K562 (cell line): ENCODE measurements at regions of chr12 and their contacts with region 1.

Region 1: DNA sequence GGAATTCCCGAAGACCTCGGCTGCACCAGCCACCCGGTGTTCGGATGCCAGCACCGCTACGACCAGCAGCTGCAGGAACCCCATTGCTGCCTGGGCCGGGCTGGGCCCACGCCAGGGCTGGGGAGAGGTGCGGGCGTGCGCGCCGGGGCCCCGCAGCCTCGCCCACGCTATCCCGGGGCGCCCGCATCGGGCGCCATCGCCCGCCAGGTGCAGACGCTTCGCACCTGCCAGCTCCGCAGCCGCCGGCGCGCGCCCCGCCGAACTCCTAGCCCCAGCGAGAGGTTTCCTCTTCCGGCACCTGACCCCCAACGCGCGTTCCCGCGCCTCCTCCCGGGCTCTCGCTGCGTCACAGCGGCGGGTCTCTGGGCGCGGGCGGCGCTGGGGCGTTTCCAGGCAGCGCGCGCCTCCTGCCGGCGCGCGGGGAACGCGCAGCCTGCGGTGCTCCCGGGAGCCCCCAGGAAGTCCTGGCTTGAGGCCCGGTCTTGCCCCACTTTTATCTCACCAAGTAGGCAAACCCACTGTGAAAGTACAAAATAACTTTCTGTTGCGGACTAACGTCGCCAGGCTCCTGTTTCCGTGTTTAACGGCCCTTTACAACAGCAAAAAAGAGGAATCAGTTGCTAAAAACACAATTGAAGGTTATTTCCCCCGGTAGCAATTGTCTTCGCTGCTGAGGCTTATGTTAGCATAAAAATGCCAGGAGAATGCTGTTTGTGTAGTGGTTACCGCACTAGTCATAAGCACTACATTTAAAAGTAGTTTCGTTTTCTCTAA is at the start of gene TM7SF3:
- DNase-seq: peak; percentile 90 to 96 (median 91)
- ATAC-seq: peak; percentile 88
- H3K4me3 ChIP-seq: peak within 1 kb of the TSS; percentile 88
- H3K27ac ChIP-seq: peak within 1 kb of the TSS; percentile 78
- H3K4me1 ChIP-seq: peaks cover 25 to 34% of the 10 kb centered on the region in 2 experiments
- H3K27me3 ChIP-seq: no peaks in the 10 kb centered on the region
- CTCF ChIP-seq: peak; percentile 96 to 97 (median 96)
- EP300 ChIP-seq: 0 out of 2 replicates have a peak, but pooled peaks have one; percentile 33
- POLR2A ChIP-seq: 0 out of 2 replicates have a peak, but pooled peaks have one; percentile 22
- RAD21 ChIP-seq: peak; percentile 94 to 95
- polyA plus RNA-seq, gene TM7SF3: 9.3 to 9.7 TPM

Region 2: DNA sequence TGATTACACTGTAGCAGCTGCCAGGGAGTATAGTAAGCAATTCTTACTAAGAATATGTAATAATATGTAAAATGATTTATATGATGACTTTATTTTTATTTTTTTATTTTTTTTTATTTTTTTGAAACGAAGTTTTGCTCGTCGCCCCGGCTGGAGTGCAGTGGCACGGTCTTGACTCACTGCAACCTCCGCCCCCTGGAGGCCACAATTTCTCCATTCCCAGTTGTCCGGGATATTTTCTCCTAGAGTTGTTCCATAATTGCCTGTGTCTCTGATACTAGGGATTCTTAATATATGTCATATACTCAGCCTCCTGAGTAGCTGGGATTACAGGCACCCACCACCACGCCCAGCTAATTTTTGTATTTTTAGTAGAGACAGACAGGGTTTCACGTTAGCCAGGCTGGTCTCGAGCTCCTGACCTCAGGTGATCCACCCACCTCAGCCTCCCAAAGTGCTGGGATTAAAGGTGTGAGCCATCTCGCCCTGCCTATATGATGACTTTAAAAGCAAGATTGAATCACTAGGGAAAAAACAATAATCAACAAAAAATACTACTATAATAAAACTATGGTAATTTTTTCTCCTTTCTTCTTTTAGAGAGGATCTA is 169.1 kb before region 1 on chr12:
- CTCF ChIA-PET with region 1: no interaction called
- POLR2A ChIA-PET with region 1: no interaction called
- in situ Hi-C with region 1: loop called (anchors 10 kb)
- intact Hi-C with region 1: loop called (anchors 2 kb)
- DNase-seq: peak in 1 of 4 experiments; percentile 52
- ATAC-seq: peak; percentile 87
- H3K4me3 ChIP-seq: no peak overlapping the region
- H3K27ac ChIP-seq: no peak overlapping the region
- H3K4me1 ChIP-seq: no peaks in the 10 kb centered on the region; a peak in 1 of 5 replicates
- H3K27me3 ChIP-seq: peaks cover 0 to 4% of the 10 kb centered on the region in 2 experiments; a peak in 2 of 5 replicates
- CTCF ChIP-seq: peak; percentile 55 to 66 (median 56)
- EP300 ChIP-seq: no peak
- POLR2A ChIP-seq: no peak
- RAD21 ChIP-seq: peak in 1 of 2 experiments; percentile 48; a peak in 3 of 4 replicates

Region 3: GRCh38 chr12:26870491-26871419 is 143.5 kb before region 1 on chr12:
- CTCF ChIA-PET with region 1: no interaction called
- POLR2A ChIA-PET with region 1: no interaction called
- in situ Hi-C with region 1: no loop called
- intact Hi-C with region 1: no loop called
- DNase-seq: no peak
- ATAC-seq: peak; percentile 33; the same call in 2 of the 3 replicates
- H3K4me3 ChIP-seq: no peak overlapping the region
- H3K27ac ChIP-seq: no peak overlapping the region
- H3K4me1 ChIP-seq: peaks cover 0 to 7% of the 10 kb centered on the region in 2 experiments; a peak in 4 of 5 replicates
- H3K27me3 ChIP-seq: no peaks in the 10 kb centered on the region
- CTCF ChIP-seq: no peak
- EP300 ChIP-seq: no peak
- POLR2A ChIP-seq: no peak
- RAD21 ChIP-seq: no peak

Region 4: DNA sequence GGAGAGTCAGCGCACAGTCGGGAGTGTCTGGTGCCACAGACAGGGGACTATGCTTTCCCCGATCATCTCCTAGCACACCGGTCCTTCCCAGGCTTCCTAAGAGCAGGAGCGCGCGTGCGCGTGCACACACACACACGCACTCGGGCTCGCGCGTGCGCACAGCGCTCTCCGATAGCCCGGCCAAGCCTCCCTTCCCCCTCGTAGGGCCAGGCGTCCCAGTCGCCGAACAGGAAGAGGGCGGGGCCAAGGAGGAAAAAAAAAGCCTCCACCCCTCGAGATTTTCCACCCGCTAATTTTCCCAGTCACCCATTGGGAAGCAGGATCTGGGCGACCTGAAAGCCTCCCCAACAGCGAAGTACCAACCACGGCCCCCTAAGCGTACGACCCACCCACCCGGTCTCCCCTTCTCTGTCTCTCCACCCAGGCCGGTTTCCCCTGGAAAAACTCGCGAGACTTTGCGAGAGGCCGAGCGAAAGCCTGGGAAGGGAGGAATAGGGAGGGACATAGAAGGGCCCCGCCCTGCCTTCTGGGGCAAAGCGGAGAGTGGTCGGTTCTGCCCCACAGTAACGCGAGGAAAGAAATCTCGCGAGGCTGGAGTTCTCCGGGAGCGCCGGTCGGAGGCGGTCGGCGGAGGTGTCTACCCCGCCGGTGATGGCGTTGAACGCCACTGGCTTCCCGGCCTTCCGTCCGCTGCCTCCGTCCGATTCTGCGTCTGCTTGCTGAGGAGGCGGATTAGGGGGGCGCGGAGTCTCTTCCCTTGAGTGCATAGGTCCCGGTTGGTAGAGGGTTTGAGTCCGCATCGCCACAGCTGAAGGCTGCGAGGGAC is 76.2 kb before region 1 on chr12 and contains the starts of genes FGFR1OP2 and INTS13:
- CTCF ChIA-PET with region 1: no interaction called
- POLR2A ChIA-PET with region 1: interaction called, 3 read pairs
- in situ Hi-C with region 1: loop called (anchors 5 kb)
- intact Hi-C with region 1: loop called (anchors 2 kb)
- DNase-seq: peak; percentile 93 to 98 (median 94)
- ATAC-seq: peak; percentile 86
- H3K4me3 ChIP-seq: peak within 1 kb of the TSS; percentile 84
- H3K27ac ChIP-seq: peak within 1 kb of the TSS; percentile 95
- H3K4me1 ChIP-seq: peaks cover 0 to 21% of the 10 kb centered on the region in 2 experiments; a peak in 3 of 5 replicates
- H3K27me3 ChIP-seq: no peaks in the 10 kb centered on the region
- CTCF ChIP-seq: peak in 1 of 3 experiments; percentile 25; a peak in 2 of 6 replicates
- EP300 ChIP-seq: 0 out of 2 replicates have a peak, but pooled peaks have one; percentile 40
- POLR2A ChIP-seq: peak; percentile 95
- RAD21 ChIP-seq: no peak
- polyA plus RNA-seq, gene FGFR1OP2: 31.6 to 33.0 TPM
- polyA plus RNA-seq, gene INTS13: 50.3 to 91.8 TPM

Region 5: GRCh38 chr12:27123642-27124041 is 109.4 kb after region 1 on chr12:
- CTCF ChIA-PET with region 1: interaction called, 3 read pairs
- POLR2A ChIA-PET with region 1: no interaction called
- in situ Hi-C with region 1: no loop called
- intact Hi-C with region 1: loop called (anchors 1 kb)
- DNase-seq: peak; percentile 11 to 27 (median 18)
- ATAC-seq: peak; percentile 53; the same call in 1 of the 3 replicates
- H3K4me3 ChIP-seq: no peak overlapping the region
- H3K27ac ChIP-seq: no peak overlapping the region
- H3K4me1 ChIP-seq: no peaks in the 10 kb centered on the region
- H3K27me3 ChIP-seq: peaks cover 0 to 9% of the 10 kb centered on the region in 2 experiments; a peak in 2 of 5 replicates
- CTCF ChIP-seq: peak in 2 of 3 experiments; percentile 19 to 51; a peak in 3 of 6 replicates
- EP300 ChIP-seq: no peak
- POLR2A ChIP-seq: no peak
- RAD21 ChIP-seq: peak; percentile 69 to 77

Region 6: DNA sequence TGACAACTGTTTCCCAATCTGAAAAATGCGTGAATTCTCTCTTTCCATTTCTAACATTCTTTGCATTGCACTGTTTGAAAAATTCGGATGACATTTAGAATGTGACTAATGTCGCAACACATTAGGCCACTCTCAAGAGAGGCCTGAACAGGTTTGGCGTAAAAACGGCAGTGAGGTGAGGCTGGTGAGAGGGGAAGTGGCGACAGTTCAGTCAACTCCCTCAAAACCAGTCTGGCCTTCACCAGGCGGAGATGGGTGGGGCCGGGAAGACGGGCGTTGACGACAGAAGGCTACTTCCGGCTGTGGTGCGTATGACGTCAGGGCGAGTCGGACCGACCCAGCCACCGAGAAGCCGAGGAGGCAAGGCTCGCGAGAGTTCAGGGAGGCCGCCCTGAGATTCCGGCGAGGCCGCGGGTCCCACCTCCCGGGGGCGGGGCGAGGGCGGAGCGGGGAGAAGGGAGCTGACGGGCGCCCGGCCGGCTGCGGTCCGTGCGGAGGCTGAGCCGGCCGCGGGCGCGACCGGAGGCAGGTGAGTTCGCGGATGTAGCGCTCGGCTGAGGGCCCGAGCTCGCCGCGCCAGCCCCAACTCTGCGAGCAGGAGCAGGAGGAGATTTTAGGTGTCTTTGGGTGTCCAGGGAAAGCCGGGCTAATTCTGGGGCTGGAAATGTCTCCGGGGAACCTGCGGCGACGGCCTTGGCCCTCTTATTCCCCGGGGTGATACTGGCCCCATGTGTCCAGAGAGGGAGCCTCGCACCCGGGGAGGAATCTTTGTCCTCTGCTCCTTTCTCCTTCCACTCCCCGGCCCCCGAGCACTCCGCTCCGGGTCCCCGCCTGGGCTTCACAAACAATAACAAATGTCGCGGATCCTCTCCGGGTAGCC is 229.8 kb after region 1 on chr12 and contains the start of gene STK38L:
- CTCF ChIA-PET with region 1: no interaction called
- POLR2A ChIA-PET with region 1: no interaction called
- in situ Hi-C with region 1: no loop called
- intact Hi-C with region 1: loop called (anchors 10 kb)
- DNase-seq: peak; percentile 91 to 97 (median 96)
- ATAC-seq: peak; percentile 100
- H3K4me3 ChIP-seq: peak within 1 kb of the TSS; percentile 65
- H3K27ac ChIP-seq: peak within 1 kb of the TSS; percentile 64
- H3K4me1 ChIP-seq: peaks cover 10 to 11% of the 10 kb centered on the region in 2 experiments
- H3K27me3 ChIP-seq: no peaks in the 10 kb centered on the region
- CTCF ChIP-seq: peak; percentile 9 to 37 (median 22); a peak in 2 of 6 replicates
- EP300 ChIP-seq: no peak
- POLR2A ChIP-seq: peak; percentile 79
- RAD21 ChIP-seq: peak; percentile 47 to 49
- polyA plus RNA-seq, gene STK38L: 2.6 to 3.2 TPM